GM10248 (cell line): ENCODE measurements at regions of chr1 and their contacts with region 1.

Region 1: GRCh38 chr1:8848663-8849386 is 29.7 kb downstream of the ENO1 start:
- DNase-seq: peak; percentile 91
- CTCF ChIP-seq: peak; percentile 85

Region 2: DNA sequence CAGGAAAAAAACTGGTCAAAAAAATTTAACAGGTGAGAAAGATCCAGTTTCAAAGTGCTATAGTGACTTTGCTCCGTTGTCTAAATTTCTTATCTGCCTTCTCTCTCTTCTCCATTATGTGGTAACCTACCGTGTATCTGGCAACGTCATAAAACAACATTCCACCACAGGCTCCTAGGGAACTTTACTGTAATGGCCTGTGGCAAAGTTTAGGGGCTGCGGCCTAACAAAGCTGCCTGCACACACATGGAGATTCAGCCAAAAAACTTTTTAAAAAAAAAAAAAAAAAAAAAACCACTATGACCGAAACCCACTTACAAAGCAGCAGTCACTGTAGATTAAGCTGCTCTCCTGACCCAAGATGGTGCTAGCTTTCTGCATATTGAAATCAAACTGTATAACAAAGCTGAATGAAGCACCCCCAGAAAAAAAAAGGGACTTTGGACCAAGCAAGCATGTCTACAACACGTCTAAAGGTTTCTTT is 328.3 kb before region 1 on chr1:
- CTCF ChIA-PET with region 1: interaction called, 15 read pairs
- POLR2A ChIA-PET with region 1: interaction called, 6 read pairs
- DNase-seq: no peak
- CTCF ChIP-seq: no peak

Region 3: GRCh38 chr1:8687039-8687438 is 161.8 kb before region 1 on chr1:
- CTCF ChIA-PET with region 1: interaction called, 13 read pairs
- POLR2A ChIA-PET with region 1: no interaction called
- DNase-seq: no peak
- CTCF ChIP-seq: no peak

Region 4: DNA sequence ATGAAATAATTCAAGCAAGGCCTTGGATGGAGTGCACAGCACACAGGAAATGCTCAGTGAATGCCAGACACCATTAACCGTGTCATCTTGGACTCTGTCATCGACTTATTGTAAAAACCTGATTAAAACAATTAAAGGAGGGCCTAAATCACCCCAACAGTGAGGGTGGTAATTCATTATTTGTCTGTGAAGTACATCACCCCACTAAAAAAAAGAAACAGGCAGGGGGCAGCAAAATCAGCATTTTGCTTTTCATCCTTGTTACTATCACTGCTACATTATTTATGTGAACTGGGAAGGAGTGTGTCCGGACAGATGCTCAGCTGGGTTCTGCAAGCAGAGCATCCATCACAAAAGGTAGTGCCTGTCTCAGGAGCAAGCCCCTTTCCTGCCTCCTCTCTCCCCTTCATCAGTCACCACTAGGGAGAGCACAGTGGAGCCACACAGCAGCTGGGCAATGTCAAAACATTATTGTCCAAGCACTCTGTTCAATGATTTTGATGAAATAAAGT is 129.9 kb before region 1 on chr1:
- CTCF ChIA-PET with region 1: interaction called, 31 read pairs
- POLR2A ChIA-PET with region 1: no interaction called
- DNase-seq: no peak
- CTCF ChIP-seq: peak; percentile 37

Region 5: DNA sequence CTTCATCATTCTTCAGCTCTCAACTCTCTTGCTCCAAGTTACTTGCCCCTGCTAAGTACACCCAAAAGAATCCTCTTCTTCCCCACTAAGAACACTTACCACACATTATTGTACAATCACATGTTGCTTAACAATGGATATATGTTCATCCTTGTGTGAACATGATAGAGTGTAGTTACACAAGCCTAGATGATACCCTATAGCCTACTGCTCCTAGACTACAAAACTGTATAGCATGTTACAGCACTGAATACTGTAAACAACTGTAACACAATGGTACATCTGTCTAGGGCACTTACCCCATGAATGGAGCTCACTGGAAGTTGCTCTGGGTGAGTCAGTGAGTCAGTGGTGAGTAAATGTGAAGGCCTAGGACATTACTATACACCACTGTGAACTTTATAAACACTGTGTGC is 108.8 kb before region 1 on chr1:
- CTCF ChIA-PET with region 1: no interaction called
- POLR2A ChIA-PET with region 1: no interaction called
- DNase-seq: no peak
- CTCF ChIP-seq: no peak

Region 6: DNA sequence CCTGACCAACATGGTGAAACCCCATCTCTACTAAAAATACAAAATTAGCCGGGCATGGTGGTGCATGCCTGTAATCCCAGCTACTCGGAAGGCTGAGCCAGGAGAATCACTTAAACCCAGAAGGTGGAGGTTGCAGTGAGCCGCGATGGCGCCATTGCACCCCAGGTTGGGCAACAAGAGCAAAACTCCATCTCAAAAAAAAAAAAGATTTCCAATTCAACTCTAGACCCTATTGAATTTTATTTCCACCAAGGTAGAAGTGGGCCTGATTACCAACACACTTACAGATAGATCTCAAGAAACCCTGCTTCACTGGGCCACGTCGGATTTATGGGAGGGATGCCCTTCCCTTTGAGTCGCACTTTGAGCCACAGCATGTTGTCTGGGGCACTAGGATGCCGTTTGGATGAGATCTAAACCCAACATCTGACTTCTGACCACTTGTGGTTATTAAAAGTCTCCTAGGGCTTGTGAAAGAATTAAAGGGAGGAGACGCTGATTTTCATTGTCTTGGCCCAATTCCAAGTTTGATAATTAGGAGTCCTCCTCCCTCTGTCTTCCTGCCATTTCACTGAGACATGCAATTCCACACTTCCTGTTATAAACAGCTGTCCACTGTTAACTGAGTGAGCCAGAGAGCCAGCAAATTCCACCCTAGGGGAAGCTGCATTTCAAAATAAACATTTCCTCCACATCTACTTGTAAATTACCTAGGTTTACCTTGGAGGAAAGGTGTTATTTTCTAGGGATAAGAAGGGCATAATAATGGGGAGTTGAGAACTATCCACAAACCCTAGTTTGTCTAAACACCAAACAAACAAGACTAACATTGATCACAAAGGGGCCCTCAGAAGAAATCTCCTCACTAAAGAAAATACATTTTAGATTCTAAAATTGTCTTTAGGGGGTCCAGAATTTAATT is 26.2 kb before region 1 on chr1:
- CTCF ChIA-PET with region 1: interaction called, 145 read pairs
- POLR2A ChIA-PET with region 1: no interaction called
- DNase-seq: no peak
- CTCF ChIP-seq: no peak

Region 7: GRCh38 chr1:8886589-8886988 is 37.8 kb after region 1 on chr1:
- CTCF ChIA-PET with region 1: interaction called, 10 read pairs
- POLR2A ChIA-PET with region 1: no interaction called
- DNase-seq: no peak
- CTCF ChIP-seq: no peak

Region 8: GRCh38 chr1:9037476-9038337 is 188.9 kb after region 1 on chr1:
- CTCF ChIA-PET with region 1: no interaction called
- POLR2A ChIA-PET with region 1: no interaction called
- DNase-seq: peak; percentile 60
- CTCF ChIP-seq: no peak